ENCODE measurements at regions of chr3 and their contacts with region 1.

Region 1: GRCh38 chr3:58630076-58630709 is 36.4 kb downstream of the FAM3D start:
- DNase-seq: peak; percentile 30
- H3K4me3 Mint-ChIP-seq: no peak overlapping the region
- H3K27ac Mint-ChIP-seq: no peak overlapping the region
- H3K4me1 Mint-ChIP-seq: no peaks in the 10 kb centered on the region
- H3K27me3 Mint-ChIP-seq: no peaks in the 10 kb centered on the region

Region 2: DNA sequence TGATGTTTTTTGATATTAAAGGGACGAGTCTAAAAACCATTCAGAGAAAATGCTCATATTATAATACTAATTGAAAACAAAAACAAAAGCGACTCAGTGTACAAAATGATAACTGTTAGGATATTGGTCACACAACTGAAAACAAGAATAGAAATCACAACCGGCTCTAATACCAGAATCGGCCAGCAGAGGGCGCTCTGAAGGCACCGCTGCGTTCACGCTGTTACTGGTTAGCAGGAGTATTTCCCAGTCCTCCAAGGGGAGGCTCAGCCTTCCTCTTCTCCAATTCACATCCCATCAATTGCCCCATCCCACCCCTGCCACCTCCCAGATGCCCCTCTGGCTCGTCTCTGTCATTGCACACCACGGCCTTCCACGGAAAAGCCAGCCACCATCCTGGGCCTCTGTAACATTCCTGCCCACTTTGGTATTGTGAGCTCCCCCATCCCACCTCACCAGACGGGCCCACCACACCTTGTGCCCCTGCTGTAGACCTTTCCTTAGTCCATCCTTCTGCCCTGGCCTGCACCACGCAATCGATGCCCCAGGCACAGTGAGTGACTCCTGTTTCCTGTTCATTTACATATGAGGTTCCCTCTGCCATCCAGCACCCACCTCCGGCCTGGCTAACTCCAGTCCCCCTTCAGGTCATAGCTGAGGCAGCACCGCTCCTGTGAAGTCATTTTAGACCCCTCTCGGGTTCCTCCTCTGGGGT is 61.5 kb before region 1 on chr3:
- intact Hi-C with region 1: loop called (anchors 1 kb)
- DNase-seq: peak; percentile 53
- H3K4me3 Mint-ChIP-seq: no peak overlapping the region
- H3K27ac Mint-ChIP-seq: no peak overlapping the region
- H3K4me1 Mint-ChIP-seq: peaks cover 4% of the 10 kb centered on the region
- H3K27me3 Mint-ChIP-seq: peaks cover 3% of the 10 kb centered on the region

Region 3: DNA sequence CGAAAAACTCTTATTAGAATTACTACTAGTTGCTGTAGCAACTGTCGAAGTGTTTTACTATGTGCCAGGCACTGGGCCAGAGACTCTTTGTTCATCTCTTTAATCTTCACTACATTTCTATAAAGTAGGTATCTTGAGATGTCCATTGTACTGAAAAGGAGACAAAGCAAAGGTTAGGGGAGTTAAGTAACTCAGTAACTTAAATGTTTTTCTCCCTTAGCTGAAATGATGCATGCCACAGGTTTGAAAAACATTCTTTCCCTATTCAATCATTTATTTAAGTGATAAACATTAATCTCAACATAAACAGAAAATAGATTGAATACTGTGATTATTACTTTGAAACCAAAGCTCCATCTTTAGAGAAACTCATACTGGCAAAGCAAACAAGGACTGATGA is 1844.9 kb after region 1 on chr3:
- intact Hi-C with region 1: no loop called
- DNase-seq: no peak
- H3K4me3 Mint-ChIP-seq: no peak overlapping the region
- H3K27ac Mint-ChIP-seq: no peak overlapping the region
- H3K4me1 Mint-ChIP-seq: no peaks in the 10 kb centered on the region
- H3K27me3 Mint-ChIP-seq: no peaks in the 10 kb centered on the region

Measured in activated T-helper 2 cell treated with anti-CD3 and anti-CD28 coated beads, Interferon-gamma antibody, Interleukin-2, Interleukin-4, amounts not matched to agents 10 μg/mL and 5 μg/mL and 100 μg/mL, durations not matched to agents 14 hours and 24 hours and 36 hours (primary cell).